A673 (cell line): ENCODE measurements at regions of chr20 and their contacts with region 1.

Region 1: DNA sequence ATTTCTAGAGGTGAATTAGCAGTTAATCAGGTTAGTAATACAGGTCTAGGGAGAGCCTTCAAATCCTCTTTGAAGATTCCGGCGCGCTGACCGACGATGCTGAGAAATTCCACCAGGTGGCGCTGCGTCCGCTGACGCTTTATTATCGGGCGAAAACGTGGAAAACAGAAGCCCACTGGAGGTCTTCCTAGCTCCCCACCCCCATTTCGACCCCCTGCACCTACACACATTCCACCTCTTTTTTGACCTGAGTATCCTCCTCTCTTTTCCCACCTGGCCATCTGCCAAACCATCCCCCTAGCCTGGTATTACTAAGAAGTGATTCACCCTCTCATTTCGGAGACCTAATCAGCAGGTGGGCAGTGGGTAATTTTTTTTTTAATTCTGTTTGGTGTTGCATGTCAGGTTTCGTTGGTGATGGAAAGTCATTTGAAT is 65.4 kb upstream of the RIN2 start:
- DNase-seq: peak; percentile 69
- H3K4me3 ChIP-seq: no peak overlapping the region
- H3K27ac ChIP-seq: no peak overlapping the region
- H3K4me1 ChIP-seq: peaks cover 5% of the 10 kb centered on the region
- H3K27me3 ChIP-seq: no peaks in the 10 kb centered on the region
- CTCF ChIP-seq: peak; percentile 94

Region 2: GRCh38 chr20:19588732-19589131 is 104.0 kb before region 1 on chr20:
- CTCF ChIA-PET with region 1: no interaction called
- POLR2A ChIA-PET with region 1: no interaction called
- intact Hi-C with region 1: no loop called
- DNase-seq: peak; percentile 59
- H3K4me3 ChIP-seq: no peak overlapping the region
- H3K27ac ChIP-seq: peak overlapping the region; percentile 87
- H3K4me1 ChIP-seq: peaks cover 37% of the 10 kb centered on the region
- H3K27me3 ChIP-seq: no peaks in the 10 kb centered on the region
- CTCF ChIP-seq: peak; percentile 26; the same call in 1 of the 2 replicates

Region 3: GRCh38 chr20:19784511-19785172 is 91.9 kb after region 1 on chr20:
- CTCF ChIA-PET with region 1: no interaction called
- POLR2A ChIA-PET with region 1: no interaction called
- intact Hi-C with region 1: loop called (anchors 10 kb)
- DNase-seq: peak; percentile 91
- H3K4me3 ChIP-seq: no peak overlapping the region
- H3K27ac ChIP-seq: peak overlapping the region; percentile 21
- H3K4me1 ChIP-seq: peaks cover 33% of the 10 kb centered on the region
- H3K27me3 ChIP-seq: no peaks in the 10 kb centered on the region
- CTCF ChIP-seq: peak; percentile 89

Region 4: GRCh38 chr20:19802492-19803158 is 109.9 kb after region 1 on chr20:
- CTCF ChIA-PET with region 1: no interaction called
- POLR2A ChIA-PET with region 1: no interaction called
- intact Hi-C with region 1: loop called (anchors 2 kb)
- DNase-seq: no peak
- H3K4me3 ChIP-seq: no peak overlapping the region
- H3K27ac ChIP-seq: no peak overlapping the region
- H3K4me1 ChIP-seq: peaks cover 13% of the 10 kb centered on the region
- H3K27me3 ChIP-seq: no peaks in the 10 kb centered on the region
- CTCF ChIP-seq: no peak

Region 5: GRCh38 chr20:19995220-19995863 is 302.6 kb after region 1 on chr20:
- CTCF ChIA-PET with region 1: no interaction called
- POLR2A ChIA-PET with region 1: no interaction called
- intact Hi-C with region 1: loop called (anchors 1 kb)
- DNase-seq: peak; percentile 83
- H3K4me3 ChIP-seq: no peak overlapping the region
- H3K27ac ChIP-seq: no peak overlapping the region
- H3K4me1 ChIP-seq: peaks cover 57% of the 10 kb centered on the region
- H3K27me3 ChIP-seq: no peaks in the 10 kb centered on the region
- CTCF ChIP-seq: peak; percentile 91